AG04449 (cell line): ENCODE measurements at regions of chr12 and their contacts with region 1.

Region 1: DNA sequence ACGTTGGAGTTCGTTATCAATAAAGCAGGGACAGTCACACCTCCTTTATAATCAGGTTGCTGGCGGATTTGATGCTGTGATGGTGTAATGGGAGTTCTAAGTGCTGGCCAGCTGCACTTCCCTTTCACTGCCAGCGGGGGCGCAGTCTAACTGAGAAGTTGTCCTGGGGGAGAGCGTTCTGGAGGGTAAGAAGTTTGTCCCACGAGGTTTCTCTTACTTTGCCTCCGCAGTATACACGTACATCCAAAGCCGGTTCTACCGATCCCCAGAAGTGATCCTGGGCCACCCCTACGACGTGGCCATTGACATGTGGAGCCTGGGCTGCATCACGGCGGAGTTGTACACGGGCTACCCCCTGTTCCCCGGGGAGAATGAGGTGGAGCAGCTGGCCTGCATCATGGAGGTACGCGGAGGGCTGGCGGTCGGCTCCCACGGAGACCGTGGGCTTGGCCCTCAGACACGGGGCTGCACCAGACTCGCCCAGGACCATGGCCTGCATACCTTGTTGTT is 42.7 kb downstream of the DYRK4 start:
- DNase-seq: peak; percentile 52
- H3K4me3 ChIP-seq: peak overlapping the region; percentile 78
- CTCF ChIP-seq: peak; percentile 96

Region 2: DNA sequence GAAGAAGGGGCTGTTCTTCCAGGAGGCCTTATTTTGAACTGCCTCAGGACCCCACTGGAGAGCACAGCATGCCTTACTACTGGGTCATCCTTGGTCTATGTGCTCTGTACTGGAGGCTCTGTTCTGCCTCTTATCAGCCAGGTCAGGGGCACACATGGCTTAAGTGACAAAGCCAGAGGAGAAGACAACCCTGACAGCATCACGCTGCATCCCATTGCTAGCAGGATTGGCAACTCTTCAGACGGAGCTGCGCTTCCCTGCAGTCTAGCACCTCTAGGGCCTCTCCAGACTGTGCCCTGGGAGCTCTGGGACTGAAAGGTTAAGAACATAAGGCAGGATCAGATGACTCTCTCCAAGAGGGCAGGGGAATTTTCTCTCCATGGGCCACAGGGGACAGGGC is 301.0 kb before region 1 on chr12:
- CTCF ChIA-PET with region 1: no interaction called
- POLR2A ChIA-PET with region 1: no interaction called
- DNase-seq: no peak
- H3K4me3 ChIP-seq: no peak overlapping the region
- CTCF ChIP-seq: no peak

Region 3: DNA sequence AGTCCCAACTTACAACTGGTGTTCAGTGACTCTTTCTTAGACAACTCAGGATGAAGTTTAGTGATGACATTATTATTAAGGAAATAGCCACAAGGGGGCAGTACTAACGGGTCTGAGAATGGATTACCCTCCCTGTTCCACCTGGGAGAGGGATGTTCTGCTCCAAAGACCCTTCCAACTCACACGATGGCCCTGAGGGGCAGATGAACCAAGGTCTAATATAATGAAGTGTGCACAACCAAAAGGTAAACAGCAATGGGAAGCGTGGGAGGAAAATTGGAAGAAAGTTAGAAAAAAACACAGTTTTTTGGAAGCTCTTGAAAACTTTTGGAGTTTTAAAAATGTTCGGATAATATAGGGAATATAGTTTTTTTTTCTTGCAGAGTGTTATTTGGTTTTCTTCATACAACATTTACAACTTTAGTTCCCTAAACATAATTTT is 183.1 kb before region 1 on chr12:
- CTCF ChIA-PET with region 1: no interaction called
- POLR2A ChIA-PET with region 1: no interaction called
- DNase-seq: no peak
- H3K4me3 ChIP-seq: no peak overlapping the region
- CTCF ChIP-seq: peak; percentile 51

Region 4: DNA sequence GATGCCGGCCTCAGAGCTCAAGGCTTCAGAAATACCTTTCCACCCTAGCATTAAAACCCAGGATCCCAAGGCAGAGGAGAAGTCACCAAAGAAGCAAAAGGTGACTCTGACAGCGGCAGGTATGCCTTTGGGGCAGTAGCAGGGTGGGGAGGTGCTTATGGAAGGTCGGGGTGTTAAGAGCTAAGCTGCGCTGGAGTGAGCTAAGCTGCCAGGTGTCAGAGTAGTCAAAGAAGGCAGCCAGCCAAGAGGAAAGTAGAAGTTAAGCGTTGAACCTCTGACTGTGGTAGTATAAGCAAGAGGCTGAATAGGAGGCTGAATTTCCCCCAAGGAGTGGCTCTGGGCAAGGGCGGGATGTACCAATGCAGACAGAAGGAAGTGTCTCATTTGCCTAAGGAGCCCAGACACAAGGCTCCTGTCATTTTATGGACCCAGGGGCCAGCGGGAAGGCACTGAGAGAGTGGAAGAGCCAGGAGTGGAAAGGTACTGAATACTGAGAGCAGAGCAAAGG is 13.5 kb before region 1 on chr12:
- CTCF ChIA-PET with region 1: interaction called, 21 read pairs
- POLR2A ChIA-PET with region 1: no interaction called
- DNase-seq: no peak
- H3K4me3 ChIP-seq: no peak overlapping the region
- CTCF ChIP-seq: no peak

Region 5: GRCh38 chr12:4763549-4763948 is 158.8 kb after region 1 on chr12:
- CTCF ChIA-PET with region 1: interaction called, 10 read pairs
- POLR2A ChIA-PET with region 1: no interaction called
- DNase-seq: no peak
- H3K4me3 ChIP-seq: no peak overlapping the region
- CTCF ChIP-seq: no peak

Region 6: GRCh38 chr12:4857472-4858291 is 252.9 kb after region 1 on chr12:
- CTCF ChIA-PET with region 1: no interaction called
- POLR2A ChIA-PET with region 1: no interaction called
- DNase-seq: peak; percentile 5
- H3K4me3 ChIP-seq: peak overlapping the region; percentile 27
- CTCF ChIP-seq: peak; percentile 88